ENCODE measurements at regions of chr12 and their contacts with region 1.

Region 1: GRCh38 chr12:43444940-43445564 is 107.0 kb downstream of the ADAMTS20 start:
- DNase-seq: peak in 1 of 2 donors; percentile 29
- ATAC-seq: no peak
- H3K4me3 ChIP-seq: no peak overlapping the region
- H3K27ac ChIP-seq: no peak overlapping the region
- H3K4me1 ChIP-seq: no peaks in the 10 kb centered on the region
- H3K27me3 ChIP-seq: peaks cover 0 to 3% (median 0%) of the 10 kb centered on the region in 7 donors
- CTCF ChIP-seq: peak; percentile 19 to 78 (median 68)

Region 2: GRCh38 chr12:43196268-43196907 is 248.7 kb before region 1 on chr12:
- intact Hi-C with region 1: no loop called
- DNase-seq: no peak
- ATAC-seq: no peak
- H3K4me3 ChIP-seq: no peak overlapping the region
- H3K27ac ChIP-seq: no peak overlapping the region
- H3K4me1 ChIP-seq: no peaks in the 10 kb centered on the region
- H3K27me3 ChIP-seq: no peaks in the 10 kb centered on the region
- CTCF ChIP-seq: no peak

Region 3: DNA sequence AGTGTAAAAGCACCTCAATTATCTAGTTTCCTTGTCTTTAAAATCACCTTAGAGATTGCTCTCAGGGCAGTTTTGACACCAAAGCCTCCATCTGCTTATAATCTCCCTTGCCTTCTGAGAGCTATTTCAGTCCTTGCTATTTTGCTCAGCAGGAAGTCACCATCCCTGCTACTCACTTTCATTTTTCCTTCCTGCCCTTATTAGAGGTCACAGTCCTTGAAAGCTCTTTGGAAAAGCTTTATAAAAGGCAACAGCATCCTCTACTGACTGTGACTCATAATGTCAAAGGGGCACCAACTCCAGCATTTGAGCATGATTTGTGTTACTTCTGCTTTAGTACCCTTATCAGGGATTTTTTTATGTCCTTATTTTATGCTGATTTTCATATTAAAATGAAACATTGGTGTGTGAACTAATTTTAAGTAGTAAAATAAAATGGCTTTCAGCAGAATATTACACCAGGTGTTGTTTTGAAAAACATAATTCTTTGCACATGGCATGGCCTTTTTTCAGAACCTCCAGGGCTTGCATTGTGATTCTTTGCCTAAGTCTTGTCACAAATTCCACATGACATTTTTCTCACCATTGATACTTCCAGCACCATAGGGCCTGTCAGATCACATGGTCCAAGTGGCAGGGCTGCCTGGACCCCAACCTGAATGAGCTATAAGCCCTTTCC is 106.1 kb before region 1 on chr12:
- intact Hi-C with region 1: no loop called
- DNase-seq: peak in 1 of 2 donors; percentile 31
- ATAC-seq: peak; percentile 93 to 100 (median 96)
- H3K4me3 ChIP-seq: no peak overlapping the region
- H3K27ac ChIP-seq: peak overlapping the region in 6 of 10 donors; percentile 28 to 71 (median 48)
- H3K4me1 ChIP-seq: peaks cover 0 to 19% (median 16%) of the 10 kb centered on the region in 9 donors
- H3K27me3 ChIP-seq: no peaks in the 10 kb centered on the region
- CTCF ChIP-seq: peak; percentile 22 to 87 (median 70)

Region 4: DNA sequence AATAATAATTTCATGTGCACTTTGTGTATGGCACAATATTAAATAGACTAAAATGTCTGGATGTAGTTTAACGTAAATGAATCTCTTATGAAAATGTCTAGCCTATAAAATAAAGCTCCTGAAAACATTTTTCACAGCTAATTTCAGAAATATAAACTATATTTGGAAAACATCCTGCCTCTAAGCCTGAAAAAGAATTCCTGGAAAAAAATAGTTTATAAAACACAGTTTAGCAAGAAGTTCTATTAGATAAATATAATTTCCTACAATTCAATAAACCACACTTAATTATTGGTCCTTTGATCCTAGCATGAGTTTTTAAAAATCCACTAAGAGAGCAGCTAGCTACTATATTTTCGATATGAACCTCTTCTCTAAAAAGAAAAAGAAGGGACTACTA is 52.9 kb before region 1 on chr12:
- intact Hi-C with region 1: no loop called
- DNase-seq: no peak
- ATAC-seq: no peak
- H3K4me3 ChIP-seq: no peak overlapping the region
- H3K27ac ChIP-seq: no peak overlapping the region
- H3K4me1 ChIP-seq: no peaks in the 10 kb centered on the region
- H3K27me3 ChIP-seq: peaks cover 0 to 8% (median 0%) of the 10 kb centered on the region in 7 donors
- CTCF ChIP-seq: no peak

Region 5: DNA sequence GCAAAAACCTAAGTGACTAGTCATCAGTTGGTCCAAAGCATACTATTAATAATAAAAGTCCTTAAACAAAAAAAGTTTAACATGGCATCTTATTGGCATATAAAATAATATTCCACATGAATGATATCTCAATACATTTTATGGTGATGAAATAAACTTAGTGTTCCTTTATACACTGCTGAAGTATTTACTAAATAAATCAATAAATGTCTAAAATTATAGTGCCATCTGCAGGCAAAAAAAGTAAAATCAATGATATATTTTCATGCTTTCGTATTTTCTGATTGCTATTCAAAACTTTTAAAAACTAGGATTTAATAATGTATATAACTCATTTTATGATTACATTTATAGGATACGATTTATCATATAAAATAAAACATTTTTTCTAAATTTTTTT is 283.1 kb after region 1 on chr12:
- intact Hi-C with region 1: loop called in 2 of 10 experiments (anchors 5 to 10 kb)
- DNase-seq: no peak
- ATAC-seq: no peak
- H3K4me3 ChIP-seq: no peak overlapping the region
- H3K27ac ChIP-seq: no peak overlapping the region
- H3K4me1 ChIP-seq: no peaks in the 10 kb centered on the region
- H3K27me3 ChIP-seq: no peaks in the 10 kb centered on the region
- CTCF ChIP-seq: peak in 6 of 9 donors; percentile 21 to 50 (median 33)

Measured in heart right ventricle (tissue), 16 donors.